MCF 10A (cell line): ENCODE measurements at regions of chr3 and their contacts with region 1.

Region 1: GRCh38 chr3:29453284-29454001 is 172.6 kb downstream of the RBMS3 start:
- DNase-seq: peak; percentile 11
- H3K4me3 Mint-ChIP-seq: no peak overlapping the region
- H3K27ac Mint-ChIP-seq: no peak overlapping the region
- H3K4me1 Mint-ChIP-seq: peaks cover 24% of the 10 kb centered on the region
- H3K27me3 Mint-ChIP-seq: no peaks in the 10 kb centered on the region
- CTCF ChIP-seq: no peak

Region 2: GRCh38 chr3:29255854-29256696 is 197.4 kb before region 1 on chr3:
- CTCF ChIA-PET with region 1: no interaction called
- POLR2A ChIA-PET with region 1: no interaction called
- intact Hi-C with region 1: no loop called
- DNase-seq: no peak
- H3K4me3 Mint-ChIP-seq: no peak overlapping the region
- H3K27ac Mint-ChIP-seq: no peak overlapping the region
- H3K4me1 Mint-ChIP-seq: peaks cover 9% of the 10 kb centered on the region
- H3K27me3 Mint-ChIP-seq: no peaks in the 10 kb centered on the region
- CTCF ChIP-seq: no peak

Region 3: GRCh38 chr3:29465836-29466235 is 12.4 kb after region 1 on chr3:
- CTCF ChIA-PET with region 1: interaction called, 3 read pairs
- POLR2A ChIA-PET with region 1: interaction called, 10 read pairs
- intact Hi-C with region 1: no loop called
- DNase-seq: peak; percentile 22
- H3K4me3 Mint-ChIP-seq: no peak overlapping the region
- H3K27ac Mint-ChIP-seq: no peak overlapping the region
- H3K4me1 Mint-ChIP-seq: peaks cover 12% of the 10 kb centered on the region
- H3K27me3 Mint-ChIP-seq: no peaks in the 10 kb centered on the region
- CTCF ChIP-seq: no peak

Region 4: DNA sequence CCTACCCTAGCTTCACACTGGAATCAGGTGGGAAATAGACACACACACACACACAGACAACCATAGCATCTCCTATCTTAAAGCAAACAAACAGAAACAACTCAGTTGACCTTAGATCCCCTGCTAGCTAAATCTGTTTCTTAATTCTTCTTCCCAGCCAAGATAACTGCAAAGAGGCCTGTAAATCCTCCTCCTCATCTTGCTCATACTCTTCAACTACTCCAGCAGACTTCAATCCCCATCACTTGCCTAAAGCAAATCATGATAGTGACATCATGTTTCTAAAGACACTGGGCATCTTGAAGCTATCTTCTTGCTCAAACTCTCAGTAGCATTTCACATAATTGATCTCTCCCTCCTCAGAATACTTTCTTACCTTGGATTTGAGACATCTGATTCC is 130.4 kb after region 1 on chr3:
- CTCF ChIA-PET with region 1: no interaction called
- POLR2A ChIA-PET with region 1: no interaction called
- intact Hi-C with region 1: no loop called
- DNase-seq: no peak
- H3K4me3 Mint-ChIP-seq: no peak overlapping the region
- H3K27ac Mint-ChIP-seq: no peak overlapping the region
- H3K4me1 Mint-ChIP-seq: peaks cover 5% of the 10 kb centered on the region
- H3K27me3 Mint-ChIP-seq: no peaks in the 10 kb centered on the region
- CTCF ChIP-seq: no peak